Posterior vena cava (tissue), 2 donors: ENCODE measurements at regions of chr10 and their contacts with region 1.

Region 1: DNA sequence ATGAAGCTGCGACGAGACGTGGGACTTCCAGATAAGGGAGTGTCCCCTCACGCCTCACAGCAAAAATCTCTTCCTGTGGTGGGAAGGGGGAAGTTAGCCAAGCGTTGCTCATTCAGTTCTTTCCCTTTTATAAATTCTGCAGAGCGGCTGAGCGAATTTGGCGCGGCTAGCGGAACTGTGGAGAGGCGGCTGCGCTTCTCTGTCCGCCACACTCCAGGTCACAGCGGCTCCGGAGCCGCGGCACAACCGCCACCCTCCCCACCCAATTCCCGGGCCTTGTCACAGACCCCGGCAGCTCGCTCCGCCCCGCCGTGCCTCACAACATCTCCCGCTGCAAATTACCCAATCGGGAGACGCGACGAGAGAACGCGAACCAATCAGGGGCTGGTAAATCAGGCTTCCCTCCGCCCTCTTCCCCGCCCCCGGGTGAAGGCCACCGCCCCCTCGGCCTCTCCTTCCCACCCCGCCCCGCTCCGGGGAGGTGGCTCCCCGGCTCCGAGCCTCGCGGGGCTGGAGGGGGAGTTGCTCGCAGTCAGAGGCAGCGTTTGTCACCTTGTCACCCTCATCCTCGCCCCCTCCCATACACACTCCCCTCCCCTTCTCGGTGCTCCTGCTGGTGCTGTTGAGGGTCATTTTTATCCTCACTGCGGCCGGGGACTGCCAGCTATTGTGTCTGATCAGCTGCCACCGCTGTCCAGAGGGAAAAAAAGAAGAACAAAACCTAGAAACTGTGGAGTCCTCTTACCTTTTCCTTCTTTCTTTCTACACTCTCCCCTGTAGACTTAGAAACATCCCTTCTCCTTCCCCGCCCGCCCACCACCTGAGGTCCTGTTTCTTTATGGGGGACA is 918 bp upstream of the ARHGAP21 start:
- DNase-seq: peak; percentile 99

Region 2: DNA sequence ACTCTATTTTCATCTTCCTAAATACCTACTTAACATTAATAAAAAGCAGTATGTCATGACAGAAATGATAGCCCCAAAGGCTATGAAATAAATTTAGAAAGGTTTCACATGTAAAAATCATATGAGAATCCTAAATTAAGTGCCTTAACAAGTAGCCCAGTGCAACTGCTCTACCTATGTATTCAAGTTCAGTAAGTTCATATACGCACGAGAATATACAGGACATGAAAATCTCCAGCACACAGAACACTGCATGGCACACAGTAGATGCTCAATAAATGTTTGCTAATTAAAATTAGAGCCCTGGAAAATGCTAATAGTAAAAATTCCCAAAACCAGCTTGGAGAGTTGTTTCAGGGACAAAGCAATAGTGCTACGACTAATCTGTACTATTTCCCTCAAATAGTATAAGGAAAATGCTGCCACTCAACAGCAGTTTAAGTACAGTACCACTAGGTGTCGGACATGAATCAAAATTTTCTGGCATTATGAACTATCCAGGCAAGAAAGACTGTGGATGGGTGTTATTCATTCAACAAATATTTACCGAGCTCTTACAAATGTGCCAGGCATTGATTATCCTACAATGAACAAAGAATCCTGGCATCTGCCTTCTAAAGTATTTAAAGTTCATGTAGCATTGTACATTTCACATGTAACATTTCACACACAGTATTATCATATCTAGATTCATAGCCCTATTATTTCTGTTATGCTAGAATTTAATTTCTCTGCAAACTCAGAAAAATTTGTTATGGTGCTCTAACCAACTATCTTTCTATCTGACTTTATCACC is 81.8 kb before region 1 on chr10:
- intact Hi-C with region 1: loop called (anchors 10 kb)
- DNase-seq: no peak

Region 3: GRCh38 chr10:24952707-24953645 is 228.4 kb after region 1 on chr10:
- intact Hi-C with region 1: loop called in 1 of 2 experiments (anchors 10 kb)
- DNase-seq: peak; percentile 82

Region 4: DNA sequence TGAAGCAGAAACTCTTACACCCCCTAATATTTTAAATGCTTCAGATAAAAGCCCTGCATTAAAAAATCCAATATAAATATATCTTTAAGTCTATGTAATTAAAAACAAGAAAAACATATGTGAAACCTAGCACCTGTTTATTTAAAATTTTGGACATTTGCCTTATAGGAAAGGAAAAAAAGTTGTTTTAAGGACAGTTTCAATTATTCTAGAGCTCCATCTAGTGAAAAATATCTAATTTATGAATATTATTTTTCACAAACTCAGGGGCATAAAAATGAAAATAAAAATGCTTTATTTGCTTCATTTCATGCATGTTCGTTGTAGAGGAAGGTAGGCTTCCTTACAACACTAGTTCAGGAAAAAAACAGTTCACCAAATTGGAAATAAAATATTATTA is 265.3 kb after region 1 on chr10:
- intact Hi-C with region 1: loop called in 1 of 2 experiments (anchors 10 kb)
- DNase-seq: no peak